Mammary epithelial cell (primary cell): ENCODE measurements at regions of chr21 and their contacts with region 1.

Region 1: GRCh38 chr21:38798481-38798882 is 7.2 kb upstream of the ETS2 start:
- DNase-seq: peak; percentile 92
- H3K4me3 ChIP-seq: no peak overlapping the region
- H3K27ac ChIP-seq: peak overlapping the region; percentile 74
- H3K4me1 ChIP-seq: peaks cover 44% of the 10 kb centered on the region
- H3K27me3 ChIP-seq: no peaks in the 10 kb centered on the region
- CTCF ChIP-seq: peak in 1 of 2 donors; percentile 13

Region 2: DNA sequence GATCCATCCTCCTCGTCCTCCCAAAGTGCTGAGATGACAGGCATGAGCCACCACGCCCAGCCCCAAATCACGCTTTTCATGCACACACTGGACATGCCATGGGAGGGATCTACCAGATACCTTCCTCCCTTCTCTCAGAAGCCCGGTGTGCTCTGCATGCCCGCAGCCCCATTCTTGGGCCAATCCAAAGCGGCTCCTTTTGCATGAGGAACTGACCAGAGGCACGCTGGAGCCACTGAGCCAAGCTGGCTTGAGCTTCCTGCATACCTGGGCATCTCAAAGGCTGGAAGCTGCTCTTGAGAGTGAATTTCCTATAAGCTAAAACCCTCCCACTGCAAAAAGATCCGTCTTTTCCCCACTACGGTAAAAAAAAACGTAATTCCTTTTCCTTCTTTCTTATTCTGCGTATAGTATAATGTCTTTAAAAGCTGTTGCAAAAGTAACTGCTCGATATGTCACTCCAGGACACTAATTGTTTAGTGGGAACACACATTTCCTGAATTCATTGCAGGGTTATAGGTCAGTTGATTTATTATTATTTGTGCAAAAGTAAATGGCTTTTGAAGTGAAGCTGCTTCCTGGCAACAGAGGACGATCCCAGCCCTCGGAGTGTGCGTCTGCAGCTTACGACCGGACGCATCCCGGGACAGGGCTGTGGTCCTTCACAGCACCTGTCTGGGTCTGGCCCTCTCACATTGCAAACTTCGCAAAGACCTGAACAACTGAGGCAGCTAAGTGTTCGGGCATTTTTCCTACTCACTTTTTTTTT is 54.5 kb before region 1 on chr21:
- CTCF ChIA-PET with region 1: no interaction called
- dilution Hi-C with region 1: no loop called
- in situ Hi-C with region 1: no loop called
- intact Hi-C with region 1: no loop called
- DNase-seq: no peak
- H3K4me3 ChIP-seq: no peak overlapping the region
- H3K27ac ChIP-seq: no peak overlapping the region
- H3K4me1 ChIP-seq: no peaks in the 10 kb centered on the region
- H3K27me3 ChIP-seq: no peaks in the 10 kb centered on the region
- CTCF ChIP-seq: no peak

Region 3: DNA sequence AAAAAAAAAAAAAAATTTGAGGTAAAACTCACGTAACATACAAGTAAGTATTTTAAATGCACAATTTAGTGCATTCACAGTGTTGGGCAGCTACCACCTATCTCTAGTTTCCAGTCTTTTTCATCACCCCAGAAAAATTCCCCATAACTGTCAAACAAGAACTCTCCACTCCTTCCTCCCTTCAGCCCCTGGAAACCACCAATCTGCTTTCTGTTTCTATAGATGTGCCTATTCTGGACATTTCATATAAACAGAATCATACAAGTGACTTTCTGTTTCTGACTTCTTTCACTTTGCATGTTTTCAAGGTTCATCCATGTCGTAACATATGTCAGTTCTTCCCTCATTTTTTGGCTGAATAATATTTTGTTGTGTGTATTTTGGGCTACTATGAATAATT is 17.6 kb before region 1 on chr21:
- CTCF ChIA-PET with region 1: no interaction called
- dilution Hi-C with region 1: no loop called
- in situ Hi-C with region 1: no loop called
- intact Hi-C with region 1: loop called (anchors 2 kb)
- DNase-seq: no peak
- H3K4me3 ChIP-seq: no peak overlapping the region
- H3K27ac ChIP-seq: peak overlapping the region; percentile 45
- H3K4me1 ChIP-seq: no peaks in the 10 kb centered on the region
- H3K27me3 ChIP-seq: no peaks in the 10 kb centered on the region
- CTCF ChIP-seq: no peak